Endothelial cell of umbilical vein (primary cell): ENCODE measurements at regions of chr9 and their contacts with region 1.

Region 1: DNA sequence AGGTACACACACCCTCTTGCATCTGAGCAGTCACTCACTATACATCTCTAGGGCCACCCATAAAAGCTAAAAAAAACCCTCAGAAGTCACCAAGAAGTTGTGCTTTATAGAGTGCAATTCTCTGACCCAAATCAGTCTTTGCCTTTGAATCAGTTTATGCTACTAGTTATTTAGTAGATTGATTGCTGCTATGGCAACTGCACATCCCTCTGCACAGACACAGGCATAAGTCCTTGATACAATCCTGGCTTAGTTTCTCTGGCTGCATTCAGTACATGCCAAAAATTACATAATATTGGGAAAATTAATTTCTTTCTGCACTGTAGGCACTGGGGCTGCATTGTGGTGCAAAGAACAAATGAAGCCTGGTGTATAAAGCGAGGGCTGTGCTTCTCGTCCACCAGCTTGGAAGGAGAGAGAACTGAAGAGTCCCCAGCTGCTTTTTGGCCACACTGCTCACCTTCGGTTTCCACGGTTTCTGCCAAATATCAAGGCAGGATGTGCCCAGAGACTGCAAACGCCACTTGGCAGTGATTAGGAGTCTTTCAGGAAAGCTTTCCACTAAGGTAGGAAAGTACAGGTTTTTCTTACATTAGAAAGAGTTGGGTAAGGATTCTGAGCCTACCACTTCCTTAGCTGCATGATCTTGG is 258.4 kb downstream of the ELAVL2 start:
- DNase-seq: no peak
- H3K4me3 ChIP-seq: no peak overlapping the region
- H3K27ac ChIP-seq: no peak overlapping the region
- H3K4me1 ChIP-seq: no peaks in the 10 kb centered on the region
- H3K27me3 ChIP-seq: no peaks in the 10 kb centered on the region
- CTCF ChIP-seq: no peak
- POLR2A ChIP-seq: no peak

Region 2: DNA sequence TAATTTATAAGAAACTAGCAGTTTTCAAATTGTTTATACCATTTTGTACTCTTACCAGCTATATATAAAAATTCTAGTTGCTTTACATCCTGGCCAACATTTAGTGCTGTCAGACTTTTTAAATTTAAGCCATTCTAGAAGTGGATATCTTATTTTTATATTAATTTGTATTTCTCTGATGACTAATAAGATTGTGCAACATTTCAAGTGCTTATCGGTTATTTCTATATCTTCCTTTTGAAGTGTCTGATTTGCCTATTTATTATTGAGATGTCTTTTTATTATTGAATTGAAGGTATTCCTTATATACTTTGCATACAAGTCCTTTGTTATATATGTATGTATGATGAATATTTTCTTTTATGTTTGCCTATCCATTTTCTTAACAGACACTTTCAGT is 65.6 kb before region 1 on chr9:
- CTCF ChIA-PET with region 1: no interaction called
- POLR2A ChIA-PET with region 1: no interaction called
- dilution Hi-C with region 1: no loop called
- intact Hi-C with region 1: loop called (anchors 5 kb)
- DNase-seq: no peak
- H3K4me3 ChIP-seq: no peak overlapping the region
- H3K27ac ChIP-seq: no peak overlapping the region
- H3K4me1 ChIP-seq: no peaks in the 10 kb centered on the region
- H3K27me3 ChIP-seq: no peaks in the 10 kb centered on the region
- CTCF ChIP-seq: no peak
- POLR2A ChIP-seq: no peak